Activated CD4-positive, alpha-beta T cell treated with anti-CD3 and anti-CD28 coated beads for 36 hours (primary cell): ENCODE measurements at regions of chr7 and their contacts with region 1.

Region 1: DNA sequence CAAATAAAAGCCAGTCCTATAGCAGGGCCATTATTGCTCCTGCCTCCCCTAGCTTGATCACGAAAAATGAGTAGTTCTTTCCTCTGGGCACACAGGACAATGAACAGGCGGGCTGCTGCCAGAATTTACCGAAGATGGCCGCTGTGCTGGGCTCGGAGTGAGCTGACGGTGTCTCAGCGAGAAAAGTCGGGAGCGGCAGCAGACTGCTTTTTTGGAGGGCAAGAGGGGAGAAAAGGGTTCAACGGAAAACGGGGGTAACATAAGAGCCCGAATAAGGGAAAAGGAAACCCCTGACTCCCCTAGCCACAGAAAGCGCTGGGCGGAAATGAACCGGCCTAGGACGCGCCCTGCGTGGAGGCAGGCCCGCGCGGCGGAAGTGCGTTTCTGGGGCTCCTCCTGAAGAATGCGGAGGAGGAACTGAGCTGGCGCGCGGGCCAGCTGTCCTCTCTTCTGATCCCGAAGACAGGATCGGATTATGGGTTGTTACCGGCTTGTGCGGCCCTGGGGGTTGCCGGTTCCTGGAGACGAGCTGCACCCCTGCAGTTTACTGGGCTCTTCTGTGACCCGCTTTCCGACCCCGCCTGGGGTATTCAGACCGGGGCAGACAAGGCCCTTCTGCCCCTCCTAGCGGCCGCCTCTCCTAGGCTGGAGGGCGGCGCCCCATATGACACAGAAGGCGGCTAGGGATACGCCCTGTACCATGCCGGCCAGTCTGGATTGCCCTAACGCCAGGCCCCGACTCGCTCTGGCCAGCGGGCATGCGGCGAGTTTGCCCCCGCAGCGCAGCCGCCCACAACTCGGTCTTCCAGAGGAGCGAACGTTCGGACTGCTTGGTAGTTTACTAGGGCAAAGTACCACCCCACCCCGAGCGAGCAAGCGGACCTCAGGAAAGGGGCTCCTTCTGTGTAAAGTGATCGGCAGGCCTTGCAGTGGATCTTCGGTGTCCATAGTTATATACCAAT is 30.1 kb upstream of the KMT2E start:
- DNase-seq: peak; percentile 93
- ATAC-seq: peak; percentile 89
- H3K4me3 Mint-ChIP-seq: peak overlapping the region; percentile 87
- H3K27ac Mint-ChIP-seq: peak overlapping the region; percentile 99
- H3K4me1 Mint-ChIP-seq: peaks cover 74% of the 10 kb centered on the region
- H3K27me3 Mint-ChIP-seq: no peaks in the 10 kb centered on the region

Region 2: GRCh38 chr7:104943502-104944343 is 40.1 kb before region 1 on chr7:
- CTCF ChIA-PET with region 1: interaction called, 26 read pairs
- POLR2A ChIA-PET with region 1: interaction called, 60 read pairs
- intact Hi-C with region 1: loop called (anchors 1 kb)
- DNase-seq: peak; percentile 87
- ATAC-seq: peak; percentile 68
- H3K4me3 Mint-ChIP-seq: peak overlapping the region; percentile 95
- H3K27ac Mint-ChIP-seq: peak overlapping the region; percentile 99
- H3K4me1 Mint-ChIP-seq: peaks cover 68% of the 10 kb centered on the region
- H3K27me3 Mint-ChIP-seq: no peaks in the 10 kb centered on the region

Region 3: DNA sequence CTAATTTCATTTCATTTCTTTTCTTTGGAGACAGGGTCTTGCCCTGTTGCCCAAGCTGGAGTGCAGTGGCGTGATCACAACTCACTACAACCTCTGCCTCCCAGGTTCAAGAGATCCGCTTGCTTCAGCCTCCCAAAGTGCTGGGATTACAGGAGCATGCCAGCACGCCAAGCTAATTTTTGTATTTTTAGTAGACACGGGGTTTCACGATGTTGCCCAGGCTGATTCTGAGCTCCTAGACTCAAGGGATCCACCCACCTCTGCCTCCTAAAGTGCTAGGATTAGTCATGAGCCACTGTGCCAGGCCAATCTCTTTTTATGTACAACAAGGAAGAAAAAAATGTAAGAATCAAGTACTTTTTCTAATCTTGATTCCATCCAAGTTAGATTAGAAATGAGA is 19.4 kb after region 1 on chr7:
- CTCF ChIA-PET with region 1: interaction called, 128 read pairs
- POLR2A ChIA-PET with region 1: interaction called, 5 read pairs
- intact Hi-C with region 1: loop called in 1 of 2 experiments (anchors 1 kb)
- DNase-seq: peak; percentile 66
- ATAC-seq: peak; percentile 93
- H3K4me3 Mint-ChIP-seq: peak overlapping the region; percentile 61
- H3K27ac Mint-ChIP-seq: peak overlapping the region; percentile 68
- H3K4me1 Mint-ChIP-seq: peaks cover 89% of the 10 kb centered on the region
- H3K27me3 Mint-ChIP-seq: no peaks in the 10 kb centered on the region

Region 4: DNA sequence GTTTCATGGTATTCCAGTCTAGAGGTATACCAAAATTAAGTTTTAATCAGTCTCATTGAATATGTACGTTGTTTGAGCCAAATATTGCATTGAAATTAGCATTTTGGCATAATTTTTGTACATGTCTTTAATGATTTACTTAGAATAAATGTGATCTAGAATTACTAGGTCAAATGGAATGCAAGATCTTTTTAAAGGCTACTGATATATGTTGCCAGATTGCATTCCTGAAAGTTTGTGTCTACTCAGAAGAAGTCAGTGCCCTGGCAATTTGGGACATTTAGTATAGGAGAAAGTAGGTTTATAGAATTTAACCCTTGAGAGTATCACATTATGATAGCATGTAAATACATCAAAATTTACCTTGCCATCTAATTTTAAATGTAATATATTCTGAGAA is 62.6 kb after region 1 on chr7:
- CTCF ChIA-PET with region 1: interaction called, 39 read pairs
- POLR2A ChIA-PET with region 1: interaction called, 4 read pairs
- intact Hi-C with region 1: loop called (anchors 1 to 2 kb)
- DNase-seq: no peak
- ATAC-seq: no peak
- H3K4me3 Mint-ChIP-seq: no peak overlapping the region
- H3K27ac Mint-ChIP-seq: no peak overlapping the region
- H3K4me1 Mint-ChIP-seq: peaks cover 45% of the 10 kb centered on the region
- H3K27me3 Mint-ChIP-seq: no peaks in the 10 kb centered on the region

Region 5: GRCh38 chr7:105098863-105099515 is 115.1 kb after region 1 on chr7:
- CTCF ChIA-PET with region 1: interaction called, 6 read pairs
- POLR2A ChIA-PET with region 1: no interaction called
- intact Hi-C with region 1: loop called (anchors 5 kb)
- DNase-seq: no peak
- ATAC-seq: peak; percentile 89
- H3K4me3 Mint-ChIP-seq: no peak overlapping the region
- H3K27ac Mint-ChIP-seq: peak overlapping the region; percentile 89
- H3K4me1 Mint-ChIP-seq: peaks cover 63% of the 10 kb centered on the region
- H3K27me3 Mint-ChIP-seq: no peaks in the 10 kb centered on the region

Region 6: DNA sequence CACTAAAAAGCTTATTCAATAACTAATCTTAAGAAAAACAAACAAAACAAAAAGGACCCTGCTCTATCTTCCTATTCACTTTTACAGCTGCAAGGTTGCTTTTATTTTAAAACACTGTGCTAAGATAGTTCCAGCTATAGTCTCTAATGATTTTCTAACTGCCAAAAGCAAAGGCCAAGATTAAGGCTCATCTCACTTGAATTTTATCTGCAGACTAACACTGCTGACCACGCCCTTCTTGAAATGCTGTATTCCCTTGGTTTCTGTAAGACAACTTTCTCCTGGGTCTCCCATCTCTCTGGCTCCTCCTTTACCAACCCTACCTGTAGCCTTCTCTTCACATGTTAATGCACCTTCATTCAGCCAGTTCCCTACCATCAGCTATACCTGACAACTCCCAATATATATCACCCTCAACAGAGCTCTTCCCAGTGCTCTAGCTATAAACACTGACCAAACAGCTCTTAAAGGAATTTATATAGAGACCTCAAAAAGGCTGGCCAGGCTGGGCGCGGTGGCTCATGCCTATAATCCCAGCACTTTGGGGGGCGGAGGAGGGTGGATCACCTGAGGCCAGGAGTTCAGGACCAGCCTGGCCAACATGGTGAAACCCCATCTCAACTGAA is 393.2 kb after region 1 on chr7:
- CTCF ChIA-PET with region 1: no interaction called
- POLR2A ChIA-PET with region 1: no interaction called
- intact Hi-C with region 1: no loop called
- DNase-seq: no peak
- ATAC-seq: no peak
- H3K4me3 Mint-ChIP-seq: no peak overlapping the region
- H3K27ac Mint-ChIP-seq: no peak overlapping the region
- H3K4me1 Mint-ChIP-seq: peaks cover 28% of the 10 kb centered on the region
- H3K27me3 Mint-ChIP-seq: no peaks in the 10 kb centered on the region

Region 7: GRCh38 chr7:105429746-105430612 is 446.1 kb after region 1 on chr7:
- CTCF ChIA-PET with region 1: interaction called, 3 read pairs
- POLR2A ChIA-PET with region 1: no interaction called
- intact Hi-C with region 1: loop called (anchors 5 kb)
- DNase-seq: peak; percentile 74
- ATAC-seq: no peak
- H3K4me3 Mint-ChIP-seq: no peak overlapping the region
- H3K27ac Mint-ChIP-seq: no peak overlapping the region
- H3K4me1 Mint-ChIP-seq: peaks cover 19% of the 10 kb centered on the region
- H3K27me3 Mint-ChIP-seq: no peaks in the 10 kb centered on the region